Dendritic cell treated with granulocyte-macrophage colony-stimulating factor and Interleukin-4, amounts not matched to agents 40 ng/mL and 50 ng/mL, for 4 days (primary cell): ENCODE measurements at regions of chr15 and their contacts with region 1.

Region 1: GRCh38 chr15:79004336-79004735 is 59.5 kb upstream of the CTSH start:
- H3K4me3 Mint-ChIP-seq: peak overlapping the region; percentile 7
- H3K27ac Mint-ChIP-seq: peak overlapping the region; percentile 83
- H3K4me1 Mint-ChIP-seq: peaks cover 68% of the 10 kb centered on the region
- H3K27me3 Mint-ChIP-seq: no peaks in the 10 kb centered on the region

Region 2: DNA sequence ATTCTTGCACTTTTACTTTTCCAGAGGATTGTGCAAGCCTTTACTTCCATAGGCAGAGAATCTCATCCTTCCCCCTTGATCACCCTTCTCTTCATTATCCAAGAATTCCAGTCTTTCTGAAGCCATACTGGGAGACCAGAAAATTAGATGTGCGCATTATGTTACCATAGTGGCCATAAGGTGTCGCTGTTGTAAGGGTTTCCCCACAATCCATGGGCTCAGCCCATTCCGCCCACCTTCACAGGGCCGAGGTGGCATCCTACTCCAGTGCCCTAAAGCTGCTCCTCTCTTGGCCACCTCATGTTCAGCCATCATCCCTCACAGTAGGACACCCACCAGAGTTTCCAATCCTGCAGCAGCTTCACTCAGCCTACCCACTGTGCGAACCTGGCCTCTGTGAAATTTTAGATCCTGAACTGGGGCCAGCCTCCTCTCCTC is 94.5 kb before region 1 on chr15:
- intact Hi-C with region 1: loop called (anchors 5 kb)
- H3K4me3 Mint-ChIP-seq: no peak overlapping the region
- H3K27ac Mint-ChIP-seq: peak overlapping the region; percentile 16
- H3K4me1 Mint-ChIP-seq: peaks cover 73% of the 10 kb centered on the region
- H3K27me3 Mint-ChIP-seq: no peaks in the 10 kb centered on the region

Region 3: DNA sequence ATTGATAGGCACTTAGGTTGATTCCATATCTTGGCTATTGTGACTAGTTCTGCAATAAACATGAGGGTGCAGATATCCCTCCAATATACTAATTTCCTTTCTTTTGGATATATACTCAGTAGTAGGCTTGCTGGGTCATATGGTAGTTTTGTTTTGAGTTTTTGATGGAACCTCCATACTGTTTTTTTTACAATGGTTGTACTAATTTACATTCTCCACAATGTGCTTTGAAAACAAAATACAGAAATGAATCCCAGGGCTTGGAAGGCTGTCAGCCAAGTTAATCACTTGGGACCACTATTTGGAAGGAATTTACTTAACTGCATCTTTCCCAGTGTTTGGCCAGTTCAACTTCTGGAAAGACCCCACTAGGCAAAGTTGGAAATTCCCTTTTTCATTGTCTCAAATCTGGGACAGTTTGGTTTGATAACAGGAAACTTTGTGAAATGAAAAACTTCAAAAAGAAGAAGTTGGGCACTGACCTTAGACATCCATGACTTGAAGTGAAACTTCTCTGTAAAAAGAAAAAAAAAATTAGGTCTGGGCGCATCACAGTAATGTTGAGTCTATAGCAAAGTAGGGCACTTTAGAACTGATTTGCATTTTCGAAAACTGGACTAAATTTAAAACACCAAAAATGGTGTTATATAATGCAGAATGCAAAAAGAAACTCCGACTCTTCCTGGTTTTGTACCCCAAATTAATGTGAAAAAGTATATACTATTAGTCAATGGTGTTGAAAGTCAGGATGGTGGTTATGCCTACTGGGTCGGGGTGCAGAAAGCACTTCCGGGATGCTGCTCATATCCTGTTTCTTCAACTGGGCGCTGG is 65.5 kb before region 1 on chr15:
- intact Hi-C with region 1: loop called (anchors 5 kb)
- H3K4me3 Mint-ChIP-seq: peak overlapping the region; percentile 57
- H3K27ac Mint-ChIP-seq: peak overlapping the region; percentile 99
- H3K4me1 Mint-ChIP-seq: peaks cover 56% of the 10 kb centered on the region
- H3K27me3 Mint-ChIP-seq: no peaks in the 10 kb centered on the region

Region 4: GRCh38 chr15:78977091-78977571 is 27.2 kb before region 1 on chr15:
- intact Hi-C with region 1: no loop called
- H3K4me3 Mint-ChIP-seq: peak overlapping the region; percentile 82
- H3K27ac Mint-ChIP-seq: peak overlapping the region; percentile 98
- H3K4me1 Mint-ChIP-seq: peaks cover 68% of the 10 kb centered on the region
- H3K27me3 Mint-ChIP-seq: no peaks in the 10 kb centered on the region

Region 5: GRCh38 chr15:78988361-78988911 is 15.9 kb before region 1 on chr15:
- intact Hi-C with region 1: loop called (anchors 1 kb)
- H3K4me3 Mint-ChIP-seq: peak overlapping the region; percentile 44
- H3K27ac Mint-ChIP-seq: peak overlapping the region; percentile 95
- H3K4me1 Mint-ChIP-seq: peaks cover 71% of the 10 kb centered on the region
- H3K27me3 Mint-ChIP-seq: no peaks in the 10 kb centered on the region